GM12878 (cell line): ENCODE measurements at regions of chrX and their contacts with region 1.

Region 1: DNA sequence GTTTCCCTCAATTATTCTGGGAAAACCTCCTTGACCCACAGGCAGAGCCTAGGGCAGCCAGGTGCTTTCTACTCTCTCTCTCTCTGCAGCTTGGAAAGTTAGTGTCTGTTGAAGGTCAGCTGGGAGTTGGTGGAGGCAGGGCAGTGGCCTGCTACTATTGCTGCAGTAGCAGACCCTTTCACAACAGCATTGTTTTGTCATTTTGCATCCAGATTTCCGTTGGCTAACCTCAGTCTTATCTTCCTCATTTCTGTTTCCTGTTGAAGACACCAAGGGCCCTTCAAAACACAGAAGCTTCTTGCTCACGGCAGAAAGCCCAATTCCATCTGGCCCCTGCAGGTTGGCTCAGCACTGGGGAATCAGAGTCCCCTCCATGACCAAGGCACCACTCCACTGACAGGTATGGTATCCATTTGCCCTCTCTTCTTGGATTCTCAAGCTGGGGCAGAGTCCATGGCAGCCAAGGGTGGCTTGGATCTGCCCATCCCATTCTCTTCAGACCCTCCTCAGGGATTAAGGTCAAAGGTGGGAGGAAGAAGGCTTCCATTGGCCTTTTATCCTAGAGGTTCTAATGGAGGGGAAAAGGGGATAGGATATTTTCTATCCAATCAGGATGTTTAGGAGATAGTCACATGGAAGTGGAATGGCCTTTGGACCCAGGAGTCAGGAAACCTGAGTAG is 24.6 kb downstream of the VSIG4 start:
- DNase-seq: peak; percentile 68
- ATAC-seq: peak; percentile 40
- H3K4me3 ChIP-seq: peak overlapping the region; percentile 11; the same call in 1 of the 2 replicates
- H3K27ac ChIP-seq: peak overlapping the region; percentile 87
- H3K4me1 ChIP-seq: peaks cover 66% of the 10 kb centered on the region
- H3K27me3 ChIP-seq: no peaks in the 10 kb centered on the region
- CTCF ChIP-seq: no peak
- EP300 ChIP-seq: no peak
- POLR2A ChIP-seq: 0 out of 2 replicates have a peak, but pooled peaks have one; percentile 31
- RAD21 ChIP-seq: no peak

Region 2: DNA sequence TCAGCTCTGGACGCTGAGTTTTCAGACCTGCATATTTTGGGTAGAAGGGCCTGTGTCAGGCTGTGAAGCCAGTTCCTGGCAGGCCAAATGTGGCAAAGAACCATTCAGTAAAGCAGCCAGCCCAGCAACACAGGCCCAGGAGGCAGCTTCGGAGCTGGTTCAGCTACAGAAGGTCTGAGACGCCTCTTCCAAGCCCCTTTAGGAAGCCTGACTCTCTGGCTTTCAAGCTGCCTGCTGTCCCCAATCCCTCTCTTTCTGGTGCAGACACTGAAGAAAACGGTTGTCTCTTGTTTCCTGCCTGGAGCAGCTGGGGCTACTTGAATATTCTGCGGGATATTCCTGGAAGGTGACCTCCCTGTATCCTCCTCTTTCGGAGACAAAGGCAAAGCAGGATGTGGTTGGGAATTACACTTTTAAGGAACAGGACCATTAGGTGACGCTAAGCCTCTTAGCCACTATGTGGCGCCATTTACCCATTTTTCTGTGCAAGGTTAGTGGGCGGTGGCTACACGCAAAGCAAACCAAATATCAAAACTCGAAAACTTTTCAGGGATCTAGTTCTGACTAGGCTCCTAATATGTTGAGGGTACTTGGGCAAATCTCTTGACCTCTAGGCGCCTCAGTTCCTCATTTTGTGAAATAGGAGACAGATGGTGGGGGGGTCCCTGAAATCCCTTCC is 433.5 kb before region 1 on chrX:
- CTCF ChIA-PET with region 1: interaction called, 3 read pairs
- POLR2A ChIA-PET with region 1: no interaction called
- RAD21 ChIA-PET with region 1: no interaction called
- SMC1A ChIA-PET with region 1: interaction called, 7 read pairs
- in situ Hi-C with region 1: no loop called
- intact Hi-C with region 1: loop called (anchors 10 kb)
- DNase-seq: no peak
- ATAC-seq: peak; percentile 90
- H3K4me3 ChIP-seq: no peak overlapping the region
- H3K27ac ChIP-seq: no peak overlapping the region
- H3K4me1 ChIP-seq: peaks cover 14% of the 10 kb centered on the region; the same call in 1 of the 2 replicates
- H3K27me3 ChIP-seq: no peaks in the 10 kb centered on the region
- CTCF ChIP-seq: peak; percentile 70 to 89 (median 87)
- EP300 ChIP-seq: peak in 1 of 2 experiments; percentile 71; a peak in 2 of 4 replicates
- POLR2A ChIP-seq: no peak
- RAD21 ChIP-seq: peak; percentile 96

Region 3: DNA sequence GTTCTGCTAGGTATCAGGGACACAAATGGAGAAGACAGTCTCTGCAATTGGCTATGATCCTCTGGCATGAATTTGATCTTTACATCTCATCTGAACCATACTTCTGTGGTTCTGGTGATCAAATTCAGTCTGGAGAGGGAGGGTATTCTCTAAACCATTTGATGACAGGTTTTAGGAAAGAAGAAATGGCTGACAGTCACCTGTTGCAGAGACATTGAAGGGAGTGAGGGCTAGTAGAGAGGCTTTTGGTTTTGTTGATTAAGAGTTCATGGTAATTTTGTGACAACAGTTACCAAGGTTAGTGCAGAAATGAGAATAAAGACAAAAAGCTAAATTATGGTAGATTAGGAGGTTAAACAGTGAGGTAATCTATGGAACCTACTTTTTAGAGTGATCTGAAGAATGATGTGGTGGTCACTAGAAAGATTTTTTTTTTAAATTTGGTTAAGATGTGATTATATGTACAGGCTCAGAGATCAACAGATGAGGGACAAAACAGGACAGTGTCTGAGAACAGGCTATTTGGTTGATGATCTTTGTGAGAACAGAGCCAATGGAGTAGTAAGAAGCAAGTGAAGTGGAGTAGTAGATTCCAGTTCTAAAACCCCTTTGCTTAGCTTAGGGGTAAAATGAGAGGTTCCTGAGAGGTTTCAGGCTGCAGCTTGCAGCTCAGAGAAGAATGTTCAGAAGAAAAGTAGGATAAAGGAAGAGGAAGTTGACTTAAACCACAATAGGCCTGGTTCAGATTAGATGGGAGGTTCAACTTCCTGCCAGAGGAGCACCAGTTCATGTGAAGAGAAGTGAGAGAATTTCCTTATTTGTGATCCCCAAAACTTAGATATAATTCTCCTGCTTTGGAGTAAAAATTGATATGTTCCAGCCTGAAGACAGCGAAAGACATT is 10.1 kb before region 1 on chrX:
- CTCF ChIA-PET with region 1: interaction called, 9 read pairs
- POLR2A ChIA-PET with region 1: interaction called, 6 read pairs
- RAD21 ChIA-PET with region 1: interaction called, 14 read pairs
- SMC1A ChIA-PET with region 1: interaction called, 12 read pairs
- in situ Hi-C with region 1: no loop called
- intact Hi-C with region 1: no loop called
- DNase-seq: no peak
- ATAC-seq: no peak
- H3K4me3 ChIP-seq: no peak overlapping the region
- H3K27ac ChIP-seq: no peak overlapping the region
- H3K4me1 ChIP-seq: peaks cover 11% of the 10 kb centered on the region
- H3K27me3 ChIP-seq: no peaks in the 10 kb centered on the region
- CTCF ChIP-seq: no peak
- EP300 ChIP-seq: no peak
- POLR2A ChIP-seq: no peak
- RAD21 ChIP-seq: no peak

Region 4: GRCh38 chrX:66046612-66047235 is 31.4 kb after region 1 on chrX:
- CTCF ChIA-PET with region 1: interaction called, 16 read pairs
- POLR2A ChIA-PET with region 1: interaction called, 18 read pairs
- RAD21 ChIA-PET with region 1: interaction called, 47 read pairs
- SMC1A ChIA-PET with region 1: interaction called, 85 read pairs
- in situ Hi-C with region 1: no loop called
- intact Hi-C with region 1: loop called (anchors 2 kb)
- DNase-seq: peak; percentile 81
- ATAC-seq: peak; percentile 82
- H3K4me3 ChIP-seq: no peak overlapping the region
- H3K27ac ChIP-seq: peak overlapping the region; percentile 85
- H3K4me1 ChIP-seq: peaks cover 36% of the 10 kb centered on the region
- H3K27me3 ChIP-seq: no peaks in the 10 kb centered on the region
- CTCF ChIP-seq: no peak
- EP300 ChIP-seq: peak; percentile 97 to 100
- POLR2A ChIP-seq: no peak
- RAD21 ChIP-seq: no peak

Region 5: DNA sequence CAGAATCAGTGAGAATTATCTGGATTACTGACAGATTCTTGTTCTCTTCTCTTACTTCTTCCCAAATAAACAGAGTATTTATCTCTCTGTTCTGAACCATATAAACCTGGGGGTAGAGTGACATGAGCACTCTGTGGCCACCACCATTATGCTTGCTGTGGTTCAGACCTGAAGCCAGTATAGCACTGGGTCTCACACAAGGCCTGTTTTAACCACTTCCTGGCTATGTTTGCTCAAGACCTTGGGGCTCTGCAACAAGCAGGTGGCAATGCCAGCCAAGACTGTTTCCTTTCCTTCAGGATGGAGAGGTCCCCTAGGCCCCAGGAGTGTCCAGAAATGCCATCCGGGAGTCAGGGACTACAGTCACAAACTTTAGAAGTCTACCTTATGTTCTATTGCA is 127.1 kb after region 1 on chrX:
- CTCF ChIA-PET with region 1: no interaction called
- POLR2A ChIA-PET with region 1: no interaction called
- RAD21 ChIA-PET with region 1: no interaction called
- SMC1A ChIA-PET with region 1: no interaction called
- in situ Hi-C with region 1: no loop called
- intact Hi-C with region 1: no loop called
- DNase-seq: no peak
- ATAC-seq: no peak
- H3K4me3 ChIP-seq: no peak overlapping the region
- H3K27ac ChIP-seq: no peak overlapping the region
- H3K4me1 ChIP-seq: no peaks in the 10 kb centered on the region
- H3K27me3 ChIP-seq: no peaks in the 10 kb centered on the region; a peak in 1 of 4 replicates
- CTCF ChIP-seq: no peak
- EP300 ChIP-seq: no peak
- POLR2A ChIP-seq: no peak
- RAD21 ChIP-seq: no peak

Region 6: GRCh38 chrX:66200855-66201795 is 185.8 kb after region 1 on chrX:
- CTCF ChIA-PET with region 1: interaction called, 11 read pairs
- POLR2A ChIA-PET with region 1: no interaction called
- RAD21 ChIA-PET with region 1: interaction called, 7 read pairs
- SMC1A ChIA-PET with region 1: interaction called, 9 read pairs
- in situ Hi-C with region 1: no loop called
- intact Hi-C with region 1: no loop called
- DNase-seq: no peak
- ATAC-seq: peak; percentile 59
- H3K4me3 ChIP-seq: no peak overlapping the region
- H3K27ac ChIP-seq: no peak overlapping the region
- H3K4me1 ChIP-seq: no peaks in the 10 kb centered on the region
- H3K27me3 ChIP-seq: no peaks in the 10 kb centered on the region
- CTCF ChIP-seq: peak; percentile 16 to 40 (median 35); a peak in 5 of 6 replicates
- EP300 ChIP-seq: no peak
- POLR2A ChIP-seq: no peak
- RAD21 ChIP-seq: peak; percentile 56